ENCODE measurements at regions of chr1 and their contacts with region 1.

Region 1: DNA sequence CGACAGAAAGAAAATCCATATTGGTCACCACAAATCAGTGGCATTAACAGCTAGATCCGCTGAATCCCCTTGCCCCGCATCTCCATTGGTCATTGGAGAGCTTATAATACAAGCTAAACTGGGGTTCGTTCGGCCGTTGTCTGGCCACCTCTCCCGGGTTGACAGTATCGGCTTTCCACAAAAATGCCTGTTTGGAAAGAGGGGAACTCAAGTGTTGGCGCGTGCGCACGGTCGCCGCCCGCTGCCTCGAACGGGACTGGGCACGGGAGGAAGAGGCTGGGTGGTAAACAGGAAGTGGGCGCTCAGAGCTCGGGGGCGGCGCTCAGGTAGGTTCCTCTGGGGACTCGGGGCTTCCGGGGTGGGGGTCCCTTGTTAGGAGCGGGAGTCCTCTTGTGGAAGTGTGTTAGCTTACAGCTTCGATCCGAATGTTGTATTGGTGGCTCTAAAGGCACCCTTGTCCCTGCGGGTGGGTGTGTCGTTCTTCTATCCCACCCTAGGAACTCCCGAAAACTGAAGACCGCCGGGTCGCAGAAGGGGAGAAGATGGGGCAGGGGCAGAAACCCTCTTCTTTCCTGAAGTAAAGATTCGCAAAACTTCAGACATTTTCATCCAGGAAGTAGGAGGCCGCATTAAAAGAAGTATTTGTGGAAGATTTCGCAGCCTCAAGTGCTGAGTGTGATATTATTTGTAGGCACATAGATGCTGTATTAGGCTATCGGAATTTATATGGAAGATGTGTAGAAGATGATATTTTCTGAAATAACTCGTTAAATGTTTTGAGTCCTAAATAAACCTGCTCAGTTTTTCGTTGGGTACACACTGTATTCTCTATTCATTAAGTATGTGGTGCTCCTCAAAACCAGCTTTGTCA is 962 bp downstream of the BROX start:
- DNase-seq: peak; percentile 93
- ATAC-seq: peak; percentile 74
- H3K4me3 Mint-ChIP-seq: peak overlapping the region; percentile 98
- H3K27ac Mint-ChIP-seq: peak overlapping the region; percentile 100
- H3K4me1 Mint-ChIP-seq: peaks cover 39% of the 10 kb centered on the region
- H3K27me3 Mint-ChIP-seq: no peaks in the 10 kb centered on the region

Region 2: GRCh38 chr1:222617367-222617951 is 95.9 kb before region 1 on chr1:
- CTCF ChIA-PET with region 1: interaction called, 3 read pairs
- POLR2A ChIA-PET with region 1: interaction called, 10 read pairs
- DNase-seq: peak; percentile 96
- ATAC-seq: peak; percentile 96
- H3K4me3 Mint-ChIP-seq: peak overlapping the region; percentile 83
- H3K27ac Mint-ChIP-seq: peak overlapping the region; percentile 90
- H3K4me1 Mint-ChIP-seq: peaks cover 19% of the 10 kb centered on the region
- H3K27me3 Mint-ChIP-seq: peaks cover 23% of the 10 kb centered on the region

Region 3: DNA sequence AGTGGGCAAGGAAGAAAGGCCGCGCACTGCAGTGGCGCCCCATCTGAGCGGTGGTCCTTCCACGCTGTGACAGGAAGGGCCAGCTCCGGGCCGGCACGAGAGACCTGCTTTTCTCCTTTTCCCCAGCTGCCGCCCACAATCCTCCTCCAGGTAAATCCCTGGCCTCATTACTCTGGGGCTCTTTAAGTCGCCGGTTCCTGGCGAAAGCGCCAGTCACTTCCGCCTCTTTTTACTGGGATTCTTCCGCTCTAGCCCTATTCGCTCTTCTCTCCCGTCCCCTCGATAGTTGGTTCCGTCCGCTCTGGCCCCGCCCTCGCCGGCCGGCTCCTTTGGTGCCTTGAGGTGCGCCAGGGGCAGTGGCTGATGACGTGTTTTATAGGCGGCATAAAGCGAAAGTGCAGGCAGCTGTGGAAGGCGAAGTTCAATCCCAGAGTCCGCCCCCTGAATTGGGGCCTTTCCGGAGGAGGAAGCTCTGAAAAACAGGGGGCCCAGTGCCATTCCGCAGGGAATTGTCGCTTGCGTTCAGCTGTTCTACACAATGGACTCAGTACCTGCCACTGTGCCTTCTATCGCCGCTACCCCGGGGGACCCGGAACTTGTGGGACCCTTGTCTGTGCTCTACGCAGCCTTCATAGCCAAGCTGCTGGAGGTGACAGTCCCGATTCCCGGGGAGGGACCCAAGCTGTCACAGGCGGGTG is 69.2 kb before region 1 on chr1:
- CTCF ChIA-PET with region 1: interaction called, 7 read pairs
- POLR2A ChIA-PET with region 1: interaction called, 22 read pairs
- DNase-seq: peak; percentile 98
- ATAC-seq: peak; percentile 97
- H3K4me3 Mint-ChIP-seq: peak overlapping the region; percentile 97
- H3K27ac Mint-ChIP-seq: peak overlapping the region; percentile 95
- H3K4me1 Mint-ChIP-seq: peaks cover 25% of the 10 kb centered on the region
- H3K27me3 Mint-ChIP-seq: no peaks in the 10 kb centered on the region

Region 4: GRCh38 chr1:222654849-222655248 is 58.5 kb before region 1 on chr1:
- CTCF ChIA-PET with region 1: interaction called, 21 read pairs
- POLR2A ChIA-PET with region 1: interaction called, 47 read pairs
- DNase-seq: peak; percentile 88
- ATAC-seq: peak; percentile 91
- H3K4me3 Mint-ChIP-seq: peak overlapping the region; percentile 55
- H3K27ac Mint-ChIP-seq: peak overlapping the region; percentile 89
- H3K4me1 Mint-ChIP-seq: peaks cover 68% of the 10 kb centered on the region
- H3K27me3 Mint-ChIP-seq: no peaks in the 10 kb centered on the region

Region 5: DNA sequence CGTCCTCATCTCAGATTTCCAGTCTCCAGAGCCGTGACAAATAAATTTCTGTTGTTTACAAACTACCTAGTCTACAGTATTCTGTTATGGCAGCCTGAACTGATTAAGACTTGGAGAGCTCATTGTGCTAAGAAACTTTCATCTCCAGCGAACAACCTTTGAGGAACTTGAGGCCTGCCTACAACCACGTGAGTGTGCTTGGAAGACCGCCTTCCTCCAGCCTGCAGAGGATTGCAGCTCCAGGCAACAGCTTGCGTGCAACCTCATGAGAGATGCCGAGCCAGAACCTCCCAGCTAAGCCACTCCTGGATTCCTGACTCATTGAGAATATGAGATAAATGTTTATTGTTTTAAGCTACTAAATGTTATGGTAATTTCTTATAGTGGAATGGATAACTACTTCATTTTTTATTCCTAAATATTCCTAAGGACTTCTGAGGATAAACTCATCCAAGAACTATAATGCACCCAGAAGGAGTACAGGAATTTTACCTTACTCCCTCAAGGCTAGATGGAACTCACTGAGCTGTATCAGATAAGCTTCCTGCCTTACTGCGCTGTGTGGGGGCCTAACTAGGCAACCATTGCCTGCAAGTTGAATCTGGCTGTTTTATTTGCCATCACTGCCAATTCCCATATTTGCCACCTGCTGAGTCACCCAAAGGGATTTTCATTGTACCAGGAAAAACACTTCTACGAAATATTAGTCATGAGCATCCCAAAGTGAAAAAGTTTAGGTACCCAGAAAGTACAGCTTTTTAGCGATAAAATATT is 41.2 kb after region 1 on chr1:
- CTCF ChIA-PET with region 1: no interaction called
- POLR2A ChIA-PET with region 1: no interaction called
- DNase-seq: no peak
- ATAC-seq: no peak
- H3K4me3 Mint-ChIP-seq: no peak overlapping the region
- H3K27ac Mint-ChIP-seq: no peak overlapping the region
- H3K4me1 Mint-ChIP-seq: no peaks in the 10 kb centered on the region
- H3K27me3 Mint-ChIP-seq: peaks cover 7% of the 10 kb centered on the region

Region 6: GRCh38 chr1:222892137-222892769 is 178.9 kb after region 1 on chr1:
- CTCF ChIA-PET with region 1: no interaction called
- POLR2A ChIA-PET with region 1: no interaction called
- DNase-seq: no peak
- ATAC-seq: no peak
- H3K4me3 Mint-ChIP-seq: no peak overlapping the region
- H3K27ac Mint-ChIP-seq: no peak overlapping the region
- H3K4me1 Mint-ChIP-seq: peaks cover 14% of the 10 kb centered on the region
- H3K27me3 Mint-ChIP-seq: no peaks in the 10 kb centered on the region

Region 7: DNA sequence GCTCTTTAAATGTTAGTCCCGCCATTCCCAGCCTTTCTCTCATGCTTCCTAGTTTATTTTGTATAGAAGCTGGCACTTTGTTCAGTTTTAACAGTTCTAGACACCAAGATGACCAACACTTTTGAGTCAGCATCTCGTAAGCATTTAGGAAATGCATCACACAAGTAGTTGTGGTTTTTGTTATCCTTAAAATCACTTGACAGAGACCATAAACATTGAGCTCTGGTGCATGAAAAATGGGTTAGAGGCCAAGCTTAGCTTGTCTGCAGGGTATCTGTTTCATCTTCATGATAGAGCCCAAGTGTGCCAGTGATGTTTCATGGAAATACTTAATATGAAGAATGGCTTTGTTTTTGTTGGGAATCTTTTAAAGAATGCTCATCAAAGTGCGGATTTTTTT is 261.2 kb after region 1 on chr1:
- CTCF ChIA-PET with region 1: no interaction called
- POLR2A ChIA-PET with region 1: no interaction called
- DNase-seq: no peak
- ATAC-seq: no peak
- H3K4me3 Mint-ChIP-seq: no peak overlapping the region
- H3K27ac Mint-ChIP-seq: no peak overlapping the region
- H3K4me1 Mint-ChIP-seq: no peaks in the 10 kb centered on the region
- H3K27me3 Mint-ChIP-seq: no peaks in the 10 kb centered on the region